IMR-90 (cell line): ENCODE measurements at regions of chr15 and their contacts with region 1.

Region 1: GRCh38 chr15:74460871-74461846 is at the start of gene UBL7:
- DNase-seq: peak; percentile 95
- ATAC-seq: peak; percentile 98
- H3K4me3 ChIP-seq: peak within 1 kb of the TSS; percentile 84
- H3K27ac ChIP-seq: peak within 1 kb of the TSS; percentile 73
- H3K4me1 ChIP-seq: peaks cover 4% of the 10 kb centered on the region; the same call in 1 of the 2 replicates
- H3K27me3 ChIP-seq: no peaks in the 10 kb centered on the region
- CTCF ChIP-seq: peak; percentile 28
- POLR2A ChIP-seq: peak; percentile 96
- RAD21 ChIP-seq: peak; percentile 53
- total RNA-seq, gene UBL7: 57.8 and 68.1 TPM in 2 replicates

Region 2: GRCh38 chr15:74545880-74546656 is 84.9 kb after region 1 on chr15:
- CTCF ChIA-PET with region 1: no interaction called
- POLR2A ChIA-PET with region 1: no interaction called
- dilution Hi-C with region 1: no loop called
- in situ Hi-C with region 1: no loop called
- intact Hi-C with region 1: loop called (anchors 2 kb)
- DNase-seq: peak; percentile 100
- ATAC-seq: peak; percentile 89
- H3K4me3 ChIP-seq: no peak overlapping the region
- H3K27ac ChIP-seq: no peak overlapping the region
- H3K4me1 ChIP-seq: peaks cover 4% of the 10 kb centered on the region
- H3K27me3 ChIP-seq: no peaks in the 10 kb centered on the region
- CTCF ChIP-seq: no peak
- POLR2A ChIP-seq: no peak; the same call in 1 of the 2 replicates
- RAD21 ChIP-seq: peak; percentile 13; the same call in 1 of the 2 replicates

Region 3: DNA sequence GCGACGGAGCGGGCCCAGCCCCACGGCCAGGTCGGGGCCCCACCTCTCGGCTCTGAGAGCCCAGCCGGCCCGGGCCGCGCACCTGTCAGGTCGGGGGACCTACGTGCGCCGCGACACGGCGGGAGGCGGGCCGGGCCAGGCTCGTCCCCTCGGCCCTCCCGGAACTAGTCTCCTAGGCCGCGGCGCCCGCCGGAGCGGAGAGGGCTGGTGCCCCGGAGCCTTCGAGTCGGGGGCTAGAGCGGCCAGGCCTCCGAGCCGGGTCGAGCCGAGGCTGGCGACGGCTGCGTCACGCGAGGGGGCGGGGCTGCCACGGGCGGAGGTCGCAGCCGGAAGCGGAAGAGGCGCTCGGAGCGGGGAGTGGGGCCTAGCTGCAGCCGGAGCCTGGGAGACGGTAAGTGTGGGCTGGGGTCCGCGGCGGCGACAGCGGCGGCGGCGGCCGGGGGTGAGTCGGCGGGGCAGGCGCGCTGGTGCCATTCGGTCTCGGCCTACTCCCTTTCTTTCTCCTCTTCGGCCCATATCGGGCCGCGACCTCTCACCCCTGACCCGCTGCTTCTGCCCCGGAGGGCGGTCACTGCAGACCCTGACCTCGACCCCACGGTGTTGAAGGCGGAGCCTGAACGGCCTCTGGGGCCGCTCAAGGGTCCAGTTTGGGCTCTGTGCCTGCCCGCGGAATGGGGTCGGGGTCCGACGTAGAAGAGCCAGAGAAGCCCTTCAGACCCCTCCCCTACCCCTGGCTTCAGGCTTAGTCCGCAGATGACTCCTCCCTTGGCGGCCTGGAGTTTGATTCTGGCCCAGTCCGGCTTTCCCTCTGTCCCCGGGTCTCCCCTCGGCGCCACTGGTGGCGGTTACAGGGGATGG is 154.6 kb after region 1 on chr15 and contains the start of gene CLK3:
- CTCF ChIA-PET with region 1: no interaction called
- POLR2A ChIA-PET with region 1: interaction called, 4 read pairs
- dilution Hi-C with region 1: no loop called
- in situ Hi-C with region 1: no loop called
- intact Hi-C with region 1: loop called (anchors 1 kb)
- DNase-seq: peak; percentile 89
- ATAC-seq: peak; percentile 81
- H3K4me3 ChIP-seq: peak within 1 kb of the TSS; percentile 93
- H3K27ac ChIP-seq: peak within 1 kb of the TSS; percentile 87
- H3K4me1 ChIP-seq: peaks cover 6% of the 10 kb centered on the region
- H3K27me3 ChIP-seq: peaks cover 2% of the 10 kb centered on the region; the same call in 1 of the 2 replicates
- CTCF ChIP-seq: no peak
- POLR2A ChIP-seq: peak; percentile 83
- RAD21 ChIP-seq: no peak
- total RNA-seq, gene CLK3: 114 and 117 TPM in 2 replicates

Region 4: DNA sequence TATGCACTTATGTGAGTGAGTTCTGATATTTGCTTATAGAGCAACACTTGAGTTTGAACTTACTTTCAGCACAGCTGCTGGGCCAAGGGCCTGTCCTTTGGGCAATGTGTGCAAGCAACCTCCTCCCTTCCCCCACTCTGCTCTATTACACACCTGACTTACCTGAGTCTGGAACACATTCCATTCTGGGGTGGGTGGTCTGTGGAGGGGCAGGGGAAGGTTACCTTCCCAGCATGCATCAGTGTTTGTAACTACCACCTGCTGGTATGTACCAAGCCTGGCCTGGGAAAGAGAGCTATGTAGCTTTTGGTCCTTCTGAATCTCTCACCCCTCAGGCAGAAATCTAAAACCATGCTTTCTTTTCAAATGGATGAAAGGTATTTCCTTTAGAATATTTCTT is 1978.4 kb after region 1 on chr15:
- CTCF ChIA-PET with region 1: no interaction called
- POLR2A ChIA-PET with region 1: no interaction called
- dilution Hi-C with region 1: no loop called
- in situ Hi-C with region 1: no loop called
- intact Hi-C with region 1: no loop called
- DNase-seq: no peak
- ATAC-seq: no peak
- H3K4me3 ChIP-seq: no peak overlapping the region
- H3K27ac ChIP-seq: no peak overlapping the region
- H3K4me1 ChIP-seq: no peaks in the 10 kb centered on the region
- H3K27me3 ChIP-seq: no peaks in the 10 kb centered on the region
- CTCF ChIP-seq: no peak
- POLR2A ChIP-seq: no peak
- RAD21 ChIP-seq: no peak